ENCODE measurements at regions of chr21 and their contacts with region 1.

Region 1: DNA sequence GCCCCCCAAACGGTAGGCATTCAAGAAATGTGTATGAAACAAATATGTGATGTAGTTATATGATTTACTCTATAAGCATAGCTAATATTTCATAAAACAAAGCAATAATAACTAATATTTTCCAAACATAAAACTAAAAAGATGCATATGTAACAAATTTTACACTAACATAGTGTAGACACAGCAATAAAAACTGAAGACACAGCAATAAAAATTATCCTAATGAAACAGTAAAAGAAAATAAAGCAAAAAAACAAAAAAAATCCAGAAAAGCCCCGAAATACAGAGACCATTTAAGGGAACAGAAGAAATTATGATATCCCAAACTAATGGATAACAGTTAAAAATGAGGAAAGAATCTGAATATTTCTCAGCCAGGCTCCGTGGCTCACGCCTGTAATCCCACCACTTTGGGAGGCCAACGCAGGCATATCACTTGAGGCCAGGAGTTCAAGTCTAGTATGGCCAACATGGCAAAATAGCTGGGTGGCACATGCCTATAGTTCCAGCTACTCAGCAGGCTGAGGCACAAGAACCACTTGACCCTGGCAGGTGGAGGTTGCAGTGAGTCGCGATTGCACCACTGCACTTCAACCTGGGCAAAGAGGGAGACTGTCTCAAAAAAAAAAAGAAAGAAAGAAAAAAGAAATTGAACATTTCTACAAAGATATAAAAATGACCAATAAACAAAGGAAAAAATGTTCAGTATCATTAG is 38.2 kb upstream of the PSMG1 start:
- DNase-seq: no peak
- H3K4me3 Mint-ChIP-seq: no peak overlapping the region
- H3K27ac Mint-ChIP-seq: no peak overlapping the region
- H3K4me1 Mint-ChIP-seq: peaks cover 21% of the 10 kb centered on the region
- H3K27me3 Mint-ChIP-seq: no peaks in the 10 kb centered on the region

Region 2: GRCh38 chr21:39189857-39190604 is 31.4 kb before region 1 on chr21:
- intact Hi-C with region 1: loop called (anchors 5 kb)
- DNase-seq: no peak
- H3K4me3 Mint-ChIP-seq: no peak overlapping the region
- H3K27ac Mint-ChIP-seq: no peak overlapping the region
- H3K4me1 Mint-ChIP-seq: peaks cover 50% of the 10 kb centered on the region
- H3K27me3 Mint-ChIP-seq: no peaks in the 10 kb centered on the region

Region 3: GRCh38 chr21:39288987-39289386 is 67.5 kb after region 1 on chr21:
- intact Hi-C with region 1: no loop called
- DNase-seq: no peak
- H3K4me3 Mint-ChIP-seq: no peak overlapping the region
- H3K27ac Mint-ChIP-seq: no peak overlapping the region
- H3K4me1 Mint-ChIP-seq: no peaks in the 10 kb centered on the region
- H3K27me3 Mint-ChIP-seq: no peaks in the 10 kb centered on the region